ENCODE measurements at regions of chr11 and their contacts with region 1.

Region 1: DNA sequence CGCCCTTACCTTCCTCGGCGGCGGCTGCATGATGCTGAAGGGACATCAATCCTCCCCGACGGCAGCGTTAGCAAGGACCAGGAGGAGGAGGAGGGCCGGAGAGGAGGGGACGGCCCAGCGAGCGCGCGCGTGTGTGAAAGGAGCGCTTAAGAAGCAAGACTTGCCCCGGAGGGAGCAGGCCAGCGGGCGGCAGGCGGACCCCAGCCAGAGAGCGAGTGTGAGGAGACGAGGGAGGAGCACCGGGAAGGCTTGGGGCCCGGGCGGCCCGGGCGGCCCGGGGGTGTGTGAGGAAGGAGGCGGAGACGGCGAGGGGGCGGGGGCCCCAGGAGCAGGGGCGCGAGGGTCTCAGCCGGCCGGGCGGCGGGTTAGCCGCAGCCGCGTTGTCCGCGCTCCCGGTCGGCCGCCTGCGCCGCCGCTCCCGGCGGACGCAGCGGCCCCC is 251 bp downstream of the FCHSD2 start:
- DNase-seq: peak; percentile 71
- ATAC-seq: peak; percentile 52
- H3K4me3 Mint-ChIP-seq: peak overlapping the region; percentile 92
- H3K27ac Mint-ChIP-seq: peak overlapping the region; percentile 94
- H3K4me1 Mint-ChIP-seq: peaks cover 61% of the 10 kb centered on the region
- H3K27me3 Mint-ChIP-seq: no peaks in the 10 kb centered on the region

Region 2: DNA sequence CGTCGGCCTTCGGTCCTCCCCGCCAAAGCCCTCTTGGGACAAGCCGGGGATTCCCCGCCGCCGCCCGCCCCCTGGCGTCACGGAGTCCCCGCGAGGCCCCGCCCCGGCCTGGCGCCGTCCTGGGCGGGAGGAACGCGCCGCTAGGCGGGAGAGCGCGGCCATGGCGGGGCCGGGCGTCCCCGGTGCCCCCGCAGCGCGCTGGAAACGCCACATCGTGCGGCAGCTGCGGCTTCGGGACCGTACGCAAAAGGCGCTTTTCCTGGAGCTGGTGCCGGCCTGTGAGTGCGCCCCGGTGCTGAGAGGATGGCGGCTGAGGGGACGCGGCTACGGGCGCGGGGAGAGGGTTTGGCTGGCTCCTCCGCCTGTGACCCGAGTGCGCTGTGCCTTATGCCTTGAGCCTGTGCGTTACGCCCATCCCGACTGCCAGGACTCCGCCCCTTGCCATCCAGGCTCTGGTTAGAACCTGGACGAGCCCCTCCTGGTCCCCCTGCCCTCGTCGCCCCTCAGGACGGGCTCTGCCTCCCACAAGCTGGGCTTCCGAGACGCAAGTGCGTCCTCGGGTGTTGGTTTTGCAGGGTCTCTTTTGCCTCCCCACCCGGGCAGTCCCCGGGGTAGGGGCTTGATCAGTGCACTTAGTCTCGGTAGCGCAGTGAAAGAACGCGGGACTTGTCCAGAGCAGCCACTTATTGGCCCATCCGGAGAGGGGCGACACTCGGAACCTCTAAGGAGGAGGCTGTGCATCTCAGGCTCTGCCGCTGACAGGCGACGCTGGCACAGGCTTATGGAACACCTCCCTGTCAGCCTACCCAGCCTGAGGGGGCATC is 327.4 kb before region 1 on chr11 and contains the start of gene ATG16L2:
- CTCF ChIA-PET with region 1: interaction called, 8 read pairs
- POLR2A ChIA-PET with region 1: interaction called, 15 read pairs
- DNase-seq: peak; percentile 88
- ATAC-seq: peak; percentile 74
- H3K4me3 Mint-ChIP-seq: peak within 1 kb of the TSS; percentile 100
- H3K27ac Mint-ChIP-seq: peak within 1 kb of the TSS; percentile 99
- H3K4me1 Mint-ChIP-seq: peaks cover 50% of the 10 kb centered on the region
- H3K27me3 Mint-ChIP-seq: no peaks in the 10 kb centered on the region
- total RNA-seq, gene ATG16L2: 104 to 105 TPM

Region 3: DNA sequence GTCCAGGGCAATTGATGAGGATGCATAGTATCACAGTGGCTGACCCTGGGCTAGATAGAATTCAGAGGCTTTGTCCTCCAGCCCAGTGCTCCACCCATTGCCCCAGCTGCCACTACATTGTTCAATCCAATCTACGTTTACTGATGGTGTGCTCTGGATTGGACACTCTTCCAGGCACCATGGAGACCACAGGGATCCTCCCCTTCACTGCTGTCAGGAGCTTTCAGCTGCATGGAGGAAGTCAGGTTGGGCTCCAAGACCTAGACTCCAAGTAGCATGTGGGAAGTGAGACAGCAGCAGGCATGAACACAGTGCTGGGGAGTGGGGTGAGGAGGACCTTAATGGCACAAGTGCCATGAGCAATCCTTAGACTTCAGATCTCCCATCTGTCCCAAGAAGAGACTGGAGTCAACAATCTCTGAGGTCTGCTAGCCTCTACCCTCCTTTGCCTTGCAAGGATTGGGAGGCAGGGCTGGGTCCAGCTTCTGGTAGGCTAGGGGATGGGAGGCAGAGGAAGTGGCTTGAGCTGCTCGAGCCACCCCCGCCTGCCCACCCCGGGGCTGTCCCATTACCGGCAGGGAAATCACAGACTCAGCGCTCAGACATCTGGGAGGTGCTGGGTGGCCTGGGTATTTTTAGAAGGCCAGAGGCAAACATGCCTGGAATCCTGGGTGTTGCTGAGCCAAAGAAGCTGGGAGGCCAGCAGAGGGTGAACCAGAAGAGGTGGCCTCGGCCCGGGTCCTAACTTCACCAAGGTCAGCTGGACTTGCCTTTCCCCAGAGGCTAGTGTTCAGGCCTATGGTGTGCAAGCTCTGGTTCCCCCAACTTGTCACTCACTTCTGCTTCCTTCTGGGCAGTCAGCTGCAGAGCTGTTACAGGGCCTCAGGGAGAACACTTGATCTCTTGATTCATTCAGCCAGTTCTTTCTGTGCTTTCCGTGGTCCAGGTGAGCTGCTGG is 15.5 kb after region 1 on chr11:
- CTCF ChIA-PET with region 1: interaction called, 69 read pairs
- POLR2A ChIA-PET with region 1: interaction called, 83 read pairs
- DNase-seq: no peak
- ATAC-seq: no peak
- H3K4me3 Mint-ChIP-seq: no peak overlapping the region
- H3K27ac Mint-ChIP-seq: no peak overlapping the region
- H3K4me1 Mint-ChIP-seq: peaks cover 65% of the 10 kb centered on the region
- H3K27me3 Mint-ChIP-seq: no peaks in the 10 kb centered on the region

Region 4: DNA sequence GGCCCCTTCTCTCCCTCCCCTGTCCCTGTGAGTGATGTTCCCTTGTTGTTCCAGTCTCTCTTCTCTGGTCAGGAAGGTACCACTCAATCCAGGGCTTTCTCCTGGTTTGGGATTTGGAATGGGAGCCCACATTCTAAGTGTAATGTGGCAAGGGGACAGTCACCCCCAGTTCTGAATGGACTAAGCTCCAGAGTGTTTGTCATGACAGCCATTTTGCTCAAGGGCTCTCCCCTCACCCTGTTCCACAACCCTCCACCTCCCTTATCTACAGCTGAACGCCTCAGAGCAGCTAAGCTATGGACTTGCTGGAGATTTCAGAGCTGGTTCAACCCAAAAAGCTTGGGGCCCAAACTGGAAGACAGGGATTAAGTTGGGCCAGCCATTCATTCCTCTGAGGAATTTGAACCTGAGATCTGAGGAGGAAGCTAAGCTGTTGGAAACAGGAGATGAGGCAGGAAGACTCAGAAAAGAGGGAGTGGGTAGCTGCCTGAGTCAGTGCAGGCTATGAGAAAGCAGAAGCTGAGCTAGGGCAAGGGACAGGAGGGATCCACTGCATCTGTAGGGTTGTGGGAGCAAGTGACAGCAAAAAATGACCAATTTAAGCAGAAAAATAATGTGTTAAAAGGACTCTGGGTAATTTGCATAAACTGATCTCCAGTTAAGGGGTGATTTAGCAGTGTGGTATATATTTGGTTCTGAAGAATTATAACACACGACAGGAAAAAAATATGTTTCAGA is 23.1 kb after region 1 on chr11:
- CTCF ChIA-PET with region 1: interaction called, 40 read pairs
- POLR2A ChIA-PET with region 1: interaction called, 3 read pairs
- DNase-seq: no peak
- ATAC-seq: no peak
- H3K4me3 Mint-ChIP-seq: no peak overlapping the region
- H3K27ac Mint-ChIP-seq: peak overlapping the region; percentile 16
- H3K4me1 Mint-ChIP-seq: peaks cover 10% of the 10 kb centered on the region
- H3K27me3 Mint-ChIP-seq: peaks cover 5% of the 10 kb centered on the region

Measured in activated CD8-positive, alpha-beta T cell treated with anti-CD3 and anti-CD28 coated beads, Interleukin-2, amount 10 ng/mL, durations not matched to agents 7 days and 5 days (primary cell).